AG04449 (cell line): ENCODE measurements at regions of chr10 and their contacts with region 1.

Region 1: GRCh38 chr10:102629661-102630614 is 14.3 kb upstream of the TRIM8 start:
- DNase-seq: peak; percentile 57
- H3K4me3 ChIP-seq: no peak overlapping the region
- CTCF ChIP-seq: no peak

Region 2: GRCh38 chr10:102432162-102432950 is 197.6 kb before region 1 on chr10 and contains the start of gene CUEDC2:
- CTCF ChIA-PET with region 1: no interaction called
- POLR2A ChIA-PET with region 1: no interaction called
- DNase-seq: peak; percentile 61
- H3K4me3 ChIP-seq: peak within 1 kb of the TSS; percentile 90
- CTCF ChIP-seq: no peak

Region 3: DNA sequence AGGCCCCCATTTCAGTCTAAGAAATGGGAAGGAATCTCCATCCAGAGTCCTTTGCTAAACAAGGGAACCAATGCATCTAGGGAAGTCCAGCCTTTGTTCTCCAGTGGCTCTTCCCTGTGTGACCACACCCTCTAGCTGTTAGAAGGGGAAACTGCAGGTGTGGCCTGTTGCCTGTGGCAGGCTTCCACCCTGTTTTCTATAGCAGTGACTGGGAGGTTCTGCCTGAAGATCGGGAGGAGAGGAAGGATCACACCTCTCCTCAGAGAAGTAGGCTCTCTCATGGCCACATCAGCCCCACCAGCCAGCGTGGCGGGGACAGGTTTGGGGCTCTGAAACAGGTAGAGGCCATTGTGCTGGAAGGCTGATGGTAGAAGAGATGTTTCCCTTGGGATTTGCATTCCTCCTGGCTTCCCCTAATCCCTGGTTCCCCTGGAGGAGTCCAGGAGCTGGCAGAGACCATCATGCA is 33.4 kb before region 1 on chr10:
- CTCF ChIA-PET with region 1: interaction called, 19 read pairs
- POLR2A ChIA-PET with region 1: interaction called, 4 read pairs
- DNase-seq: no peak
- H3K4me3 ChIP-seq: no peak overlapping the region
- CTCF ChIP-seq: peak; percentile 74

Region 4: GRCh38 chr10:102641880-102642735 is 12.2 kb after region 1 on chr10:
- CTCF ChIA-PET with region 1: interaction called, 11 read pairs
- POLR2A ChIA-PET with region 1: interaction called, 16 read pairs
- DNase-seq: peak; percentile 87
- H3K4me3 ChIP-seq: peak overlapping the region; percentile 91
- CTCF ChIP-seq: no peak